ENCODE measurements at regions of chr6 and their contacts with region 1.

Region 1: GRCh38 chr6:118968416-118968815 is 33.5 kb upstream of the MCM9 start:
- DNase-seq: peak; percentile 47
- H3K4me3 Mint-ChIP-seq: no peak overlapping the region
- H3K27ac Mint-ChIP-seq: no peak overlapping the region
- H3K4me1 Mint-ChIP-seq: no peaks in the 10 kb centered on the region
- H3K27me3 Mint-ChIP-seq: no peaks in the 10 kb centered on the region
- CTCF ChIP-seq: peak; percentile 28

Region 2: GRCh38 chr6:118580585-118581419 is 387.6 kb before region 1 on chr6:
- CTCF ChIA-PET with region 1: no interaction called
- POLR2A ChIA-PET with region 1: no interaction called
- intact Hi-C with region 1: no loop called
- DNase-seq: peak; percentile 94
- H3K4me3 Mint-ChIP-seq: peak overlapping the region; percentile 71
- H3K27ac Mint-ChIP-seq: peak overlapping the region; percentile 29
- H3K4me1 Mint-ChIP-seq: peaks cover 16% of the 10 kb centered on the region
- H3K27me3 Mint-ChIP-seq: no peaks in the 10 kb centered on the region
- CTCF ChIP-seq: peak; percentile 68

Region 3: GRCh38 chr6:118912646-118913045 is 55.8 kb before region 1 on chr6:
- CTCF ChIA-PET with region 1: no interaction called
- POLR2A ChIA-PET with region 1: no interaction called
- intact Hi-C with region 1: no loop called
- DNase-seq: no peak
- H3K4me3 Mint-ChIP-seq: no peak overlapping the region
- H3K27ac Mint-ChIP-seq: no peak overlapping the region
- H3K4me1 Mint-ChIP-seq: no peaks in the 10 kb centered on the region
- H3K27me3 Mint-ChIP-seq: no peaks in the 10 kb centered on the region
- CTCF ChIP-seq: no peak

Region 4: GRCh38 chr6:119078376-119079282 is 110.2 kb after region 1 on chr6 and contains the start of gene FAM184A:
- CTCF ChIA-PET with region 1: interaction called, 11 read pairs
- POLR2A ChIA-PET with region 1: interaction called, 3 read pairs
- intact Hi-C with region 1: no loop called
- DNase-seq: peak; percentile 64
- H3K4me3 Mint-ChIP-seq: peak within 1 kb of the TSS; percentile 96
- H3K27ac Mint-ChIP-seq: peak within 1 kb of the TSS; percentile 69
- H3K4me1 Mint-ChIP-seq: peaks cover 14% of the 10 kb centered on the region
- H3K27me3 Mint-ChIP-seq: no peaks in the 10 kb centered on the region
- CTCF ChIP-seq: peak; percentile 21
- total RNA-seq, gene FAM184A: 1.3 and 2.2 TPM in 2 replicates

Region 5: GRCh38 chr6:119096721-119097565 is 128.5 kb after region 1 on chr6:
- CTCF ChIA-PET with region 1: interaction called, 15 read pairs
- POLR2A ChIA-PET with region 1: interaction called, 5 read pairs
- intact Hi-C with region 1: no loop called
- DNase-seq: peak; percentile 86
- H3K4me3 Mint-ChIP-seq: no peak overlapping the region
- H3K27ac Mint-ChIP-seq: peak overlapping the region; percentile 72
- H3K4me1 Mint-ChIP-seq: peaks cover 7% of the 10 kb centered on the region
- H3K27me3 Mint-ChIP-seq: no peaks in the 10 kb centered on the region
- CTCF ChIP-seq: no peak

Region 6: DNA sequence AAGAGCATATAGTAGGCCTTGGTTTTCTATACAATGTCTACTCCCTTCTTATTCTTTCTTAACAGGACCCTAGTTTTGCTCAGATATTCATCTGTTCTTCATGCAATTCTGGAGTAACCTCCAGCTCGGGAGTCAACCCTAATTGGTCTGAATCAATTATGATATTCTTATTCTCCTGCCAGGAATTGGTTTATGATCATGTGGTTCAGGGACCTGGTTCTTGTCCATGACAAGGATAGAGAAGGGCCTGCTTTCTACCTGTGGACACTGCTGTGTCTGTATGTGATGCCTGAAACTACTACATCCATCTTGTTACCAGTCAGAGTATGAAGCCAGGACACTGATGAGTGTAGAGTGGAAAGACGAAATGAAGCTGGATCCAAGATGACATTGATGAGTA is 134.5 kb after region 1 on chr6:
- CTCF ChIA-PET with region 1: interaction called, 420 read pairs
- POLR2A ChIA-PET with region 1: interaction called, 5 read pairs
- intact Hi-C with region 1: no loop called
- DNase-seq: no peak
- H3K4me3 Mint-ChIP-seq: no peak overlapping the region
- H3K27ac Mint-ChIP-seq: no peak overlapping the region
- H3K4me1 Mint-ChIP-seq: no peaks in the 10 kb centered on the region
- H3K27me3 Mint-ChIP-seq: no peaks in the 10 kb centered on the region
- CTCF ChIP-seq: no peak

Region 7: DNA sequence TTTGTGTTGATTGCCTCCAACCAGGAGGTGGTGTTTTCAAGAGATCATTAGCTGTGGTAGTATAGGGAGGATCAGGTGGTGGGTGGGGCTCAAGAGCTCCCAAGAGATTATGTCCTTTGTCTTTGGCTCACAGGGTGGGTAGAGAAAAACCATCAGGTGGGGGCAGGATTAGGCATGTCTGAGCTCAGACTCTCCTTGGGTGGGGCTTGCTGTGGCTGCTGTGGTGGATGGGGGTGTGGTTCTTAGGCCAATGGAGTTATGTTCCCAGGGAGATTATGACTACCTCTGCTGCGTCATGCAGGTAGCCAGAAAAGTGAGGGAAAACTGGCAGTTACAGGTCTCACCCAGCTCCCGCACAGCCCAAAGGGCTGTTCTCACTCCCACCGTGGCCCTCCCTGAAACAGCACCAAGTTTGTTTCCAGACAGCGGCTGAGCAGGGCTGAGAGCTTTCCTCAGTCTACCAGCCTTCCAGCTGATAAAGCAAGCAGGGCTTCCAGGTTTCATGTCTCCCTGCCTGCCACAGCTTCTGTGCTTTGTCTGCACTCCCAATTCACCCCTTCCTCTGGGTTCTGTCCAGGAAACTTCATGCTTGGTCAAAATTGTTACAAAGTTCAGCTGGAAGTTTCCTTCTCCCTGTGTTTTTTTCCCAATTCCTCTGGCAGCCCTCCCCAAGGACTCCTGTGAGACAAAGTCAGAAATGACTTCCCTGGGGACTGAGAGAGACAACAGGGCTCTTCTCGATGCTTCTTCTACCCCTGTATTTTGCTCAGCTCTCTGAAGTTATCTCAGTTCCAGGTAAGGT is 862.3 kb after region 1 on chr6:
- CTCF ChIA-PET with region 1: no interaction called
- POLR2A ChIA-PET with region 1: no interaction called
- intact Hi-C with region 1: no loop called
- DNase-seq: peak; percentile 88
- H3K4me3 Mint-ChIP-seq: peak overlapping the region; percentile 46
- H3K27ac Mint-ChIP-seq: peak overlapping the region; percentile 76
- H3K4me1 Mint-ChIP-seq: peaks cover 38% of the 10 kb centered on the region
- H3K27me3 Mint-ChIP-seq: no peaks in the 10 kb centered on the region
- CTCF ChIP-seq: no peak

Region 8: DNA sequence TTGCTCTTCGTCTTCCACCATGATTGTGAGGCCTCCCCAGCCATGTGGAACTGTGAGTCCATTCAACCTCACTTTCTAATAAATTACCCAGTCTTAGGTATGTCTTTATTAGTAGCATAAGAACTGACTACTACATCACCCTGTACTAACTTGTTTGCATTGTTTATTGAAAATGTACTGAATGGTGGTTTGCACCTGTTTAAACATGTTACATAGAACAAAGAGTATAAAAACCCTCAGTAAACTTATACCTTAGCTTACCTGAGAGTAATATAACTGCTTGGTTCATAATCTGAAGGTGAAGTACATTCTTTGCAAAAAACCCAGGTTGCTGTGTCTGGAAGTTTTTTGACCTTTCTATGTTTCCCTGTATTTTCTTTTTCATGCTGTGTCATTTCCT is 1588.1 kb after region 1 on chr6:
- CTCF ChIA-PET with region 1: no interaction called
- POLR2A ChIA-PET with region 1: no interaction called
- intact Hi-C with region 1: no loop called
- DNase-seq: no peak
- H3K4me3 Mint-ChIP-seq: no peak overlapping the region
- H3K27ac Mint-ChIP-seq: no peak overlapping the region
- H3K4me1 Mint-ChIP-seq: no peaks in the 10 kb centered on the region
- H3K27me3 Mint-ChIP-seq: no peaks in the 10 kb centered on the region
- CTCF ChIP-seq: no peak